T-cell (primary cell): ENCODE measurements at regions of chr1 and their contacts with region 1.

Region 1: GRCh38 chr1:179941454-179941853 is 13.2 kb upstream of the CEP350 start:
- DNase-seq: no peak
- ATAC-seq: no peak
- H3K4me3 ChIP-seq: no peak overlapping the region
- H3K4me3 Mint-ChIP-seq: no peak overlapping the region
- H3K27ac ChIP-seq: no peak overlapping the region
- H3K27ac Mint-ChIP-seq: no peak overlapping the region
- H3K4me1 ChIP-seq: no peaks in the 10 kb centered on the region
- H3K4me1 Mint-ChIP-seq: peaks cover 0 to 3% (median 0%) of the 10 kb centered on the region in 3 donors
- H3K27me3 ChIP-seq: no peaks in the 10 kb centered on the region
- H3K27me3 Mint-ChIP-seq: peaks cover 2 to 6% of the 10 kb centered on the region in 2 donors

Region 2: GRCh38 chr1:181064025-181064623 is 1122.7 kb after region 1 on chr1:
- CTCF ChIA-PET with region 1: interaction called in 1 of 2 experiments, 10 read pairs
- POLR2A ChIA-PET with region 1: no interaction called
- DNase-seq: no peak
- ATAC-seq: no peak
- H3K4me3 ChIP-seq: no peak overlapping the region
- H3K4me3 Mint-ChIP-seq: no peak overlapping the region
- H3K27ac ChIP-seq: no peak overlapping the region
- H3K27ac Mint-ChIP-seq: peak overlapping the region in 1 of 2 donors; percentile 70
- H3K4me1 ChIP-seq: peaks cover 2 to 11% of the 10 kb centered on the region in 2 experiments
- H3K4me1 Mint-ChIP-seq: peaks cover 23 to 24% (median 23%) of the 10 kb centered on the region in 3 donors
- H3K27me3 ChIP-seq: no peaks in the 10 kb centered on the region
- H3K27me3 Mint-ChIP-seq: no peaks in the 10 kb centered on the region